ENCODE measurements at regions of chr19 and their contacts with region 1.

Region 1: DNA sequence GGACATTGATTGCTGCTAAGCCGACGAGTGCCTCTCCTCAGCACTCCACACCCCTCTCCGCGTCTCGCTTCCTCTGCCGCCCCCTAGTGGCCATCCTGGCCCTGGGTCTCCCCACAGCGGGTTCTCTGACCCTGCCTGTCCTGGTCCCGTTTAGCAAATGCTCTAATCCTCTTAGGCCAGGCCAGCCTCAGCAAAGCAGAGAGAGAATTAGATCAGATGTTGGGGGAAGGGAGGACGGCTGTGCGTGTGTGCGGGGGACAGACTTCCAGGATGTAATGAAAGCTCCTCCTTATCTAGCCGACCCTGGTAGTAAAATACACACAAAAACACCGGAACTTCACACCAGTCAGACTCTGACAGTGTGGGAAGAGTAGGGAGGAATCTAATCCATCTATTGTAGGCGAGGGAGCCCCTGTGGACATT is 4.5 kb downstream of the TPRX2 start:
- DNase-seq: peak; percentile 72
- ATAC-seq: peak; percentile 98
- H3K4me3 ChIP-seq: no peak overlapping the region
- H3K27ac ChIP-seq: no peak overlapping the region
- H3K4me1 ChIP-seq: peaks cover 8 to 20% of the 10 kb centered on the region in 2 experiments
- H3K27me3 ChIP-seq: no peaks in the 10 kb centered on the region
- CTCF ChIP-seq: peak; percentile 93 to 99 (median 98)
- POLR2A ChIP-seq: no peak
- RAD21 ChIP-seq: peak; percentile 96

Region 2: DNA sequence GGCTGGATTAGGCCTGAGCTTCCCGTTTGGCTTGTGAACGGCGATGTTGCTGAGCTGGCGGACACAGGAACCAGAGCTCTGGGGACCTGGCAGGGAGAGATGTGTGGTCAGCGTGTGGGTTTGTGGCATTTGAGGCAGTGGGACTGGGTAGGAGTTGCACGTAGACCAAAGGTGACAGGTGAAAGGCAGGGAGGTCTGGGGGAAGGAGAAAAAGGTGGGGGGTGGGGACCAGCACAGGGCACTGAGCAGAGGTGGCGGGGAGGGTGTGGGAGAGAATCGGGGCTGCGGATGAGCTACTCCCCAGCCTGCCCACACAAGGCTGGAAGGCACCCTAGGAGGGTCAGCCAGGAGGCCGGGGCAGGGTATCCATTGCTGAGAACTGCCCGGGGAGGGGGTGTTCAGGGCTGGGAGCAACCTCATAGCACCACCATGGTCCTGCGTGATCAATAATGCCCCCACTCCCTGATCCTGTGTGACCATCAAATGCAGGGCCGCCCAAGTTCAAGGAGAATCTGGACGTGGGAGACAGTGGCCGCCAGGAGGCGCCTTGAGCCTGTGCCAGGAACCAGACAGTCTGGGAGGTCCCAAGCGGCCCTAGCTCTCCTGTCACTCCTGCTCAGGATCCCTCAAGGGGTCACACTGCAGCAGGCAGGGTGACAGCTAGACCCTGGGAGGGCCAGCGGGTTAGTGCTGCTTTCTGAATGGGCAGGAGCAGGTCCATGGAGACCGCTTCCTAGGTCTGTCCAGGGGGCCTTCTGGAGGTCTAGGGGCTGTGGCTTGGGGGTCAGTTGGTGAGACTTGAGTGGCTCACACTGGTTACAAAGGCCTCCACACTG is 97.8 kb before region 1 on chr19:
- CTCF ChIA-PET with region 1: interaction called, 16 read pairs
- POLR2A ChIA-PET with region 1: no interaction called
- RAD21 ChIA-PET with region 1: no interaction called
- intact Hi-C with region 1: no loop called
- DNase-seq: no peak
- ATAC-seq: peak; percentile 88
- H3K4me3 ChIP-seq: no peak overlapping the region
- H3K27ac ChIP-seq: no peak overlapping the region
- H3K4me1 ChIP-seq: peaks cover 3 to 7% of the 10 kb centered on the region in 2 experiments; a peak in 1 of 4 replicates
- H3K27me3 ChIP-seq: no peaks in the 10 kb centered on the region
- CTCF ChIP-seq: peak; percentile 71 to 91 (median 89)
- POLR2A ChIP-seq: no peak
- RAD21 ChIP-seq: peak; percentile 82

Region 3: DNA sequence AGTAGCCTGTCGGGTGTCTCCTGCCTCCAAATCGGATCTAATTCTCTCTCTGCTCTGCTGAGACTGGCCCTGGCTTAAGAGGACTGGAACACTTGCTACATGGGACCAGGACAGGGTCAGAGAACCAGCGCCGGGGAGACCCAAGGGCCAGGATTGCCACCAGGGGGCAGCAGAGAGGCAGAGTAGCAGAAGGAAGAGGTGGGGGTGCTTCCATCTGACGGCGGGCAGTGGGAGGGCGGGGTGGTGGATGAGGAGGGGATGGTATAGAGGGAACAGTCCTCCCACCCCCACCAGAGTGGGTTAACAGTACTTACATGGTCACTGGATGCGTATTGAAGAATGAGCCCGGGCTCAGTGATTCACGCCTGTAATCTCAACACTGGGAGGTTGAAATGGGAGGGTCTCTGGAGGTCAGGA is 73.1 kb before region 1 on chr19:
- CTCF ChIA-PET with region 1: interaction called, 3 read pairs
- POLR2A ChIA-PET with region 1: no interaction called
- RAD21 ChIA-PET with region 1: no interaction called
- intact Hi-C with region 1: loop called (anchors 2 kb)
- DNase-seq: peak; percentile 88
- ATAC-seq: peak; percentile 88
- H3K4me3 ChIP-seq: peak overlapping the region; percentile 21 to 23
- H3K27ac ChIP-seq: peak overlapping the region; percentile 81
- H3K4me1 ChIP-seq: peaks cover 14 to 25% of the 10 kb centered on the region in 2 experiments
- H3K27me3 ChIP-seq: no peaks in the 10 kb centered on the region
- CTCF ChIP-seq: peak; percentile 87 to 98 (median 97)
- POLR2A ChIP-seq: no peak
- RAD21 ChIP-seq: peak; percentile 64

Region 4: DNA sequence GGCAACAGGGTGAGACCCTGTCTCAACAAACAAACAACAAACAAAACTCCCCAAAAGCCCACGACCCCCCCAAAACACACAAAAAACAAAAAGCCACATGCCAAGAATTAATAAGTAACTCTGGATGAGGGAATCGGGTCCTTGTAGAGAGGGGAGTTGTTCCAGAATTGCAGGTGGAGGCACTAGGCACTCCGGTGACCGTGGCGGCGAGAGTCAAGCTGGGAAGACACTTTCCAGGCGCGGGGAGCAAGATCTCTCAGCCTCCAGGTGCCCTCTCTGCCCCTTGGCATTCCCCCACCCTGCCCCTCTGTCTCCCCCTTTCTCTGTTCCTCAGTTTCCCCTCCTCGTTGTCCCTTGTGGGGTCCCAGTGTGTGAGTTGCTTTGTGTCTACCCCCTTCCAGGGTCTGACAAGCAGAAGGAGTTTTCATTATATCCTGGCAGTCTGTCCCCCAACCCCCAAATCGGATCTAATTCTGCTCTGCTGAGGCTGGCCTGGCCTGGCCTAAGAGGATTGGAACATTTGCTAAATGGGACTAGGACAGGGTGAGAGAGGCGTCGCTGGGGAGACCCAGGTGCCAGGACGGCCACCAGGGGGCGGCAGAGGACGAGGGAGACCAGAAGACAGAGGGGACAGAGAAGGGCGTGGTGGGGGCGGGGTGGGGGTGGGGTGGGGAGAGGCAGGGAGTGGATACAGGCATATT is 50.1 kb before region 1 on chr19:
- CTCF ChIA-PET with region 1: interaction called, 7 read pairs
- POLR2A ChIA-PET with region 1: no interaction called
- RAD21 ChIA-PET with region 1: no interaction called
- intact Hi-C with region 1: loop called (anchors 5 kb)
- DNase-seq: peak; percentile 61
- ATAC-seq: peak; percentile 99
- H3K4me3 ChIP-seq: no peak overlapping the region
- H3K27ac ChIP-seq: no peak overlapping the region
- H3K4me1 ChIP-seq: peaks cover 5 to 19% of the 10 kb centered on the region in 2 experiments
- H3K27me3 ChIP-seq: no peaks in the 10 kb centered on the region
- CTCF ChIP-seq: peak; percentile 55 to 69 (median 64); a peak in 5 of 6 replicates
- POLR2A ChIP-seq: no peak
- RAD21 ChIP-seq: peak; percentile 68

Region 5: GRCh38 chr19:47848823-47849473 is 14.6 kb before region 1 on chr19:
- CTCF ChIA-PET with region 1: interaction called, 17 read pairs
- POLR2A ChIA-PET with region 1: interaction called, 3 read pairs
- RAD21 ChIA-PET with region 1: no interaction called
- intact Hi-C with region 1: no loop called
- DNase-seq: peak; percentile 57
- ATAC-seq: peak; percentile 76
- H3K4me3 ChIP-seq: peak overlapping the region; percentile 36 to 54
- H3K27ac ChIP-seq: peak overlapping the region; percentile 15
- H3K4me1 ChIP-seq: peaks cover 5 to 16% of the 10 kb centered on the region in 2 experiments; a peak in 3 of 4 replicates
- H3K27me3 ChIP-seq: no peaks in the 10 kb centered on the region
- CTCF ChIP-seq: peak; percentile 87 to 98 (median 88)
- POLR2A ChIP-seq: no peak
- RAD21 ChIP-seq: peak; percentile 28

Measured in HCT116 (cell line).